Mammary epithelial cell (primary cell): ENCODE measurements at regions of chr16 and their contacts with region 1.

Region 1: GRCh38 chr16:69513188-69513961 is 52.4 kb upstream of the NFAT5 start:
- DNase-seq: peak; percentile 95
- H3K4me3 ChIP-seq: no peak overlapping the region
- H3K27ac ChIP-seq: peak overlapping the region; percentile 56
- H3K4me1 ChIP-seq: peaks cover 28% of the 10 kb centered on the region
- H3K27me3 ChIP-seq: no peaks in the 10 kb centered on the region
- CTCF ChIP-seq: no peak

Region 2: DNA sequence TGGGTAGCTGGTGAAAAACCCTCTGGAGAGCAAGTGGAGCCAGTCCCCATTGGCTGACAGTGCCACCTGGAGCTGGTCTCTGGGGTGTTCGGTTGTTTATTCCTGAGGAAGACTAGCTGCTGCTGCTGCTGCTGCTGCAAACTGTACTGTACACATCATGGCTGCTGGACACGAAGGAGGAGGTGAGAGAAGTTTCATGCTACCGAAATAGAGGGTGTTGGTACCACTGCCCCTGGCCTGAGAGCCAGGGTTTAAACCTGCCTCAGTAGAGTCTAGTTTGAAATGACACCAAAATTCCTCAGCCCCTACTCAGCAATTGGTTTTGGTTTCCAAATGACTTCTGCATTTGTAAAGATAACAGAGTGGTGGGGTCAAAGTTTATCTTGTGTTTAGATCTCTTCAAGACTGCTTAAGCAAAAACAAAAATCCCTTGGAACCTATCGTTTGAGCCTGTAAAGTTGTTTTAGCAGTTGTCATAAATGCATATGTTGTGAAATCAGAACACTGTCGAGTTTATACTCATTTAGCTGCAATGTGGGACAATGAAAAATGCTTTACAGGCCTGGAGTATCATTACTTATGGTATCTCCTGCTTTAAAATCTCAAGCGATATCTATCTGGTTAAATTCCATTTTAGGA is 48.2 kb before region 1 on chr16:
- CTCF ChIA-PET with region 1: no interaction called
- dilution Hi-C with region 1: no loop called
- in situ Hi-C with region 1: no loop called
- intact Hi-C with region 1: no loop called
- DNase-seq: no peak
- H3K4me3 ChIP-seq: no peak overlapping the region
- H3K27ac ChIP-seq: no peak overlapping the region
- H3K4me1 ChIP-seq: peaks cover 18% of the 10 kb centered on the region
- H3K27me3 ChIP-seq: no peaks in the 10 kb centered on the region
- CTCF ChIP-seq: peak in 1 of 2 donors; percentile 30

Region 3: GRCh38 chr16:69531988-69532387 is 18.6 kb after region 1 on chr16:
- CTCF ChIA-PET with region 1: no interaction called
- dilution Hi-C with region 1: no loop called
- in situ Hi-C with region 1: no loop called
- intact Hi-C with region 1: loop called (anchors 2 kb)
- DNase-seq: no peak
- H3K4me3 ChIP-seq: no peak overlapping the region
- H3K27ac ChIP-seq: no peak overlapping the region
- H3K4me1 ChIP-seq: peaks cover 40% of the 10 kb centered on the region
- H3K27me3 ChIP-seq: no peaks in the 10 kb centered on the region
- CTCF ChIP-seq: no peak

Region 4: DNA sequence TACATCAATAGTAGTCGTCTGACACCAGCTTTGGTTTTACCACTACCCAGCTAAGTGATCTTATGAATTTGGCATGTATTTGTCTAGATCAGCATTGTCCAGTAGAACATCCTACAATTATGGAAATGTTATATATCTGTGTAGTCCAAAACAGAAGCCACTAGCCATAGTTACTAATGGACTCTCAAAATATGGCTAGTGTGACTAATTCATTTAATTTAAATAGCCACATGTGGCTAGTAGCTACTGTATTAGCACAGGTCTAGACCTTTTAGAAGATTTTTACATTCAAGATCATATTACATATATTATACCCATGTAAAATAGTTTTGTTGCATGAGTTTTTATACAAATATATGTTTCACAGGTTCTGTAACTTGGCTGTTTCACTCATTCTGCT is 25.4 kb after region 1 on chr16:
- CTCF ChIA-PET with region 1: no interaction called
- dilution Hi-C with region 1: no loop called
- in situ Hi-C with region 1: no loop called
- intact Hi-C with region 1: loop called (anchors 1 kb)
- DNase-seq: no peak
- H3K4me3 ChIP-seq: no peak overlapping the region
- H3K27ac ChIP-seq: no peak overlapping the region
- H3K4me1 ChIP-seq: peaks cover 28% of the 10 kb centered on the region
- H3K27me3 ChIP-seq: no peaks in the 10 kb centered on the region
- CTCF ChIP-seq: no peak